ENCODE measurements at regions of chr22 and their contacts with region 1.

Region 1: DNA sequence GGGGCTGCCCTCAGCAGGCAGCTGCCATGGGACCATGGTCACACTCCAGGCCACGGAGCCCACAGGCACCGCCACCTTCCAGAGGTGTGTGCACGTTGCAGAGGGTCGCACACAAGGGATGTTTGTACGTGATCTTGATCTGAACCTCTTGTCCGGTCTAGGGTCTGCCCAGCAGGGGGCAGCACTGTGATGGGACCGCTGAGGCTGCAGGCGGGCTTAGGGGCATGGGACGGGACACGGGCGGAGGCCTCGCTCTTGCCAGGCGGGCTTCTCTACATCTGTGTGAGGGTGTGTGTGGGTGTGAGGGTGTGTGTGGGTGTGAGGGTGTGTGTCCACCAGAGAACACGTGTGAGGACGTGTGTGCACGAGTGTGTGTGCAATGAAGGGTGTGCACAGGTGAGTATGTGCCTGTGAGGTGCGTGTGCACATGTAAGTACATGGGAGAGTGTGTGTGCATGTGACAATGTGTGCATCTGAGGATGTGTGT is 52.4 kb downstream of the CACNA1I start:
- DNase-seq: peak; percentile 42
- H3K4me3 Mint-ChIP-seq: no peak overlapping the region
- H3K27ac Mint-ChIP-seq: no peak overlapping the region
- H3K4me1 Mint-ChIP-seq: peaks cover 3% of the 10 kb centered on the region
- H3K27me3 Mint-ChIP-seq: peaks cover 6% of the 10 kb centered on the region

Region 2: GRCh38 chr22:39384750-39385480 is 238.0 kb before region 1 on chr22:
- intact Hi-C with region 1: no loop called
- DNase-seq: no peak
- H3K4me3 Mint-ChIP-seq: no peak overlapping the region
- H3K27ac Mint-ChIP-seq: no peak overlapping the region
- H3K4me1 Mint-ChIP-seq: peaks cover 5% of the 10 kb centered on the region
- H3K27me3 Mint-ChIP-seq: no peaks in the 10 kb centered on the region

Region 3: DNA sequence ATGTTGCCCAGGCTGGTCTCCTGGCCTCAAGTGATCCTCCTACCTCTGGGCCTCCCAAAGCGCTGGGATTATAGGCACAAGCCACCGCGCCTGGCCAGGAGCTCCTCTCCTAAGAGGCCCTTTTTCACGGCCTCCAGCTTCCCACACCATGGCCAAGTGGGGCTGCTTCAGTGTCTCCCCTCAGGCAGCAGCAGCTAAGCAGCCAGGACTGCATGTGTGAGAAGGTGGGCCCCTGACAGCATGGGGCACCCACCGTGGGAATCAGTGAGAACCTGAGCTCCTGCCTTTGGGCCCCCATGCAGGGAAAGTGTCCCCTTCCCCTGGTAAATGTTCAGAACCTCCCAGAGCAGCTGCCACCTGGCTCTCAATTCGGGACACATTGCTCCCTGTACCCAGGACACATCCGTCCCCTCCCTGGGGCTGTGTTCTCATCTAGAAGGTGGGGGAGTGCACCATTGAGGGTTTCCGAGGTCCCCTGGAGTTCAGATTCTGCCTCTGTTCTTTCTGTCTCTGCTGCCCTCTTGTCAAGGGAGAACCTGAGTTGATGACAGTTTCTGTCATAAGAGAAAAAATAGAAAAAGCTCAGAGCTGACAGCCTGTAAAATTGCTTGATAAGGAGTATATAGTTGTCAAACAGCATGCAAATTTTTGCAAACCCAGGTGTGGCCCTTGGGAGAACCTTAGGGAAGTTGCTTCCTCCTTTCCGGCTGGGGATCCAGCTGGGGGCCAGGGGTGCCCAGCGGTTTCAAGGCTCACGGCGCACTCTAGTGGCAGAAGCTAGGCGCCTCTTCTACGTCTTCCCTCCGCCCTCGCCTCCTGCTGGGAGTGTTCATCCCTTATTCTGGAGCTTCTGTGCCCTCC is 401.5 kb after region 1 on chr22:
- intact Hi-C with region 1: loop called (anchors 1 kb)
- DNase-seq: peak; percentile 39
- H3K4me3 Mint-ChIP-seq: no peak overlapping the region
- H3K27ac Mint-ChIP-seq: no peak overlapping the region
- H3K4me1 Mint-ChIP-seq: no peaks in the 10 kb centered on the region
- H3K27me3 Mint-ChIP-seq: no peaks in the 10 kb centered on the region